ENCODE measurements at regions of chrX and their contacts with region 1.

Region 1: DNA sequence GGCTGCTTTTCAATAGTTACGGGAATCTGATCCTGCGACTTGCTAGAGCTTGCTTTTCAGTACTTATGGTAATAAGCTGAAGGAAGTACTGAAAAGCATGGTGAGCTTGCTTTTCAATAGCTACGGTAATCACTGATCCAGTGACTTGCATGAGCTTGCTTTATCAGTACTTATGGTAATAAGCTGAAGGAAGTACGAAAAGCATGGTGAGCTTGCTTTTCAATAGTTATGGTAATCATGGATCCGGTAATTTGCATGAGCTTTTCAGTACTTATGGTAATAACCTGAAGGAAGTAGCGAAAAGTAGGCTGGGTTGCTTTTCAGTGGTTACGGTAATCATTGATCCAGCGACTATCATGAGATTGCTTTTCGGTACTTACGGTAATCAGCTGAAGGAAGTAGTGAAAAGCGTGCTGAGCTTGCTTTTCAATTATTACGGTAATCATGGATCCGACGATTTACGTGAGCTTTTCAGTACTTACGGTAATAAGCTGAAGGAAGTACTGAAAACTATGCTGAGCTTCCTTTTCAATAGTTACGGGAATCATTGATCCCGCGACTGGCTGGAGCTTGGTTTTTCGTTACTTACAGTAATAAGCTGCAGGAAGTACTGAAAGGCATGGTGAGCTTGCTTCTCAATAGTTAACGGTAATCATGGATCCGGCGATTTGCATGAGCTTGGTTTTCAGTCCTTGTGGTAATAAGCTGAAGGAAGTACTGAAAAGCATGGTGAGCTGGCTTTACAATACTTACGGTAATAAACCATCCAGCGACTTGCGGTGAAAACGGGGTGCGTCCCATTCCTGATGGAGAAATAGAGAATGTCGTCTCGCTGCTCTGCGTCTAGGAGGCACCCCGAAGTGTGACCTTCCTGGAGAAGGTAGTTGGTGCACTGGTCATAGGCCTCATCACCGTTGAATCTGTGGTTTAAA is 6.5 kb downstream of the CRLF2 start:
- DNase-seq: peak; percentile 87
- ATAC-seq: peak; percentile 54
- H3K4me3 ChIP-seq: peak overlapping the region; percentile 50 to 95 (median 67)
- H3K4me3 Mint-ChIP-seq: peak overlapping the region; percentile 79
- H3K27ac ChIP-seq: no peak overlapping the region
- H3K27ac Mint-ChIP-seq: no peak overlapping the region
- H3K4me1 ChIP-seq: peaks cover 13 to 17% of the 10 kb centered on the region in 2 donors
- H3K4me1 Mint-ChIP-seq: peaks cover 16% of the 10 kb centered on the region
- H3K27me3 ChIP-seq: no peaks in the 10 kb centered on the region
- H3K27me3 Mint-ChIP-seq: peaks cover 11% of the 10 kb centered on the region
- CTCF ChIP-seq: no peak

Region 2: DNA sequence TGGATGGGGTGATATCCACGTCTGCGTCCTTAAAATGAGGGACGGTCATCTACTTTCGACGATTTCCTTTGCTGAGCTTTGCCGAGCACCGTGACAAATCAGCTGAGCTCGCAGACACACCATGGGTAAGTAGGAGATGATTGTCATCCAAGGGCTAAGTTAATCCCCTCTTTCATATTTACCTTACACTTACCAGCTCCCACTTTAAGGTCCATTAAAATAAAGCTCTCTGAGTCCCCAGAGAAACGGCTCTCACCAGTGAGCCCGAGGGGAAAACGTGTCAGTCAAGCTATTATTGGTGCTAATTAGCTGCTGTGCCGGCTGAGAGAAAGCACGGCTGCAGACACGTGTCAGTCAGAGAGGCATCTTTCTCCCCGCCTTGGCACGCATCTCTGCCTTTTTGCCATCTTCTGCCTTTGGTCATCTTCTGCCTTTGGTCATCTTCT is 65.7 kb before region 1 on chrX:
- CTCF ChIA-PET with region 1: no interaction called
- POLR2A ChIA-PET with region 1: no interaction called
- intact Hi-C with region 1: no loop called
- DNase-seq: no peak
- ATAC-seq: no peak
- H3K4me3 ChIP-seq: no peak overlapping the region
- H3K4me3 Mint-ChIP-seq: no peak overlapping the region
- H3K27ac ChIP-seq: no peak overlapping the region
- H3K27ac Mint-ChIP-seq: no peak overlapping the region
- H3K4me1 ChIP-seq: no peaks in the 10 kb centered on the region
- H3K4me1 Mint-ChIP-seq: no peaks in the 10 kb centered on the region
- H3K27me3 ChIP-seq: no peaks in the 10 kb centered on the region
- H3K27me3 Mint-ChIP-seq: no peaks in the 10 kb centered on the region
- CTCF ChIP-seq: no peak

Region 3: GRCh38 chrX:1185561-1185960 is 20.4 kb before region 1 on chrX:
- CTCF ChIA-PET with region 1: no interaction called
- POLR2A ChIA-PET with region 1: no interaction called
- intact Hi-C with region 1: no loop called
- DNase-seq: no peak
- ATAC-seq: no peak
- H3K4me3 ChIP-seq: no peak overlapping the region
- H3K4me3 Mint-ChIP-seq: no peak overlapping the region
- H3K27ac ChIP-seq: no peak overlapping the region
- H3K27ac Mint-ChIP-seq: no peak overlapping the region
- H3K4me1 ChIP-seq: no peaks in the 10 kb centered on the region
- H3K4me1 Mint-ChIP-seq: no peaks in the 10 kb centered on the region
- H3K27me3 ChIP-seq: no peaks in the 10 kb centered on the region
- H3K27me3 Mint-ChIP-seq: no peaks in the 10 kb centered on the region
- CTCF ChIP-seq: no peak

Region 4: DNA sequence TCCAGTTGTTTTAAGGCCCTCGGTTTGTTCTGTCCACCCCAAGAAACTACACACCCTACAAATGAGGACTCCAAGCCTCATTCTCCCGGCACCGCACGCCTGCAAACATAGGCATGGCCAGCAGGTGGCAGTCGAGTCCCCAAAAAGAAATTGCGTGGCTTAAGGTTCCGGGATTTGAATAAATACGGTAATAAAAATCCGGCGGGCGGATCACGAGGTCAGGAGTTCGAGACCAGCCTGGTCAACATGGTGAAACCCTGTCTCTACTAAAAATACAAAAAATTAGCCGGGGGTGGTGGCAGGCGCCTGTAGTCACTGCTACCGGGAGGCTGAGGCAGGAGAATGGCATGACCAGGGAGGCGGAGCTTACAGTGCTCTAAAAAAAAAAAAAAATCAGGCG is 40.9 kb after region 1 on chrX:
- CTCF ChIA-PET with region 1: no interaction called
- POLR2A ChIA-PET with region 1: no interaction called
- intact Hi-C with region 1: loop called (anchors 2 kb)
- DNase-seq: peak; percentile 84
- ATAC-seq: peak; percentile 64
- H3K4me3 ChIP-seq: no peak overlapping the region
- H3K4me3 Mint-ChIP-seq: no peak overlapping the region
- H3K27ac ChIP-seq: no peak overlapping the region
- H3K27ac Mint-ChIP-seq: peak overlapping the region; percentile 61
- H3K4me1 ChIP-seq: peaks cover 12 to 20% of the 10 kb centered on the region in 2 donors
- H3K4me1 Mint-ChIP-seq: peaks cover 17% of the 10 kb centered on the region
- H3K27me3 ChIP-seq: no peaks in the 10 kb centered on the region
- H3K27me3 Mint-ChIP-seq: no peaks in the 10 kb centered on the region
- CTCF ChIP-seq: peak; percentile 90

Region 5: DNA sequence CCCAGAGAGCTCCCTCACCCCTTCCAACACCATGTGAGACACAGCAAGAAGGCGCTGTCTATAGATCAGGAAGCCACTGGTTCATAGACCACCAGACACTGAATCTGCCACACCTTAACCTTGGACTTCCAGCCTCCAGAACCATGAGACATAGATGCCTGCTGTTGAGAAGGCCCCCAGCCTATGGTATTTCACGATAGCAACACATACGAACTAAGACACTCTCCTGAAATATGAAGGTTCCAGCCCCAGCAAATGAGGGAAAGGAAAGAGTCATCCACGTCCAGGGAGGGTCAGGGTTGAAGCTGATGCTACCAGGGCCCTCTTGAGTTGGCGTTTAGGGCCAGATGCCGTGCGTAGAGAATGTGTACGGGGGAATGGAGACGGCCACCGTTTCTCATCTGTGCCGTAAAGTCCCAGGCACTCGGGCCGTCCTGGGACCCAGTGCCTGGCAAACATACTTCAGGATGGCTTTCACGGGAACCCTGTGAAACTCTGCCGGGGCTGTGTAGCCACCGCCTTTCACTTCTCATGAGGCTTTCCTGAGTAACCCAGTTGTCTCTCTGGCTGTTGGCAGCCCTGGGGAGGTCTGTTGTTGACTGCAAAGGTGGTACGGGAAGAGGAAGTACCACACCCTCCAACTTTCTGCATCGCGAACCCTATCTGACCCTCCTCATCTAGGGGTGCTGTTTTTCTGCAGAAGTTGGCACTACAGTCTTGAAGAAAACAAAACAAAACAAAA is 348.7 kb after region 1 on chrX:
- CTCF ChIA-PET with region 1: no interaction called
- POLR2A ChIA-PET with region 1: no interaction called
- intact Hi-C with region 1: no loop called
- DNase-seq: peak; percentile 89
- ATAC-seq: peak; percentile 98
- H3K4me3 ChIP-seq: peak overlapping the region in 1 of 5 experiments; percentile 23
- H3K4me3 Mint-ChIP-seq: peak overlapping the region; percentile 78
- H3K27ac ChIP-seq: peak overlapping the region; percentile 85 to 99
- H3K27ac Mint-ChIP-seq: peak overlapping the region; percentile 99
- H3K4me1 ChIP-seq: peaks cover 50 to 59% of the 10 kb centered on the region in 2 donors
- H3K4me1 Mint-ChIP-seq: peaks cover 53% of the 10 kb centered on the region
- H3K27me3 ChIP-seq: no peaks in the 10 kb centered on the region
- H3K27me3 Mint-ChIP-seq: no peaks in the 10 kb centered on the region
- CTCF ChIP-seq: no peak